Activated CD4-positive, alpha-beta memory T cell treated with anti-CD3 and anti-CD28 coated beads for 36 hours (primary cell): ENCODE measurements at regions of chr12 and their contacts with region 1.

Region 1: DNA sequence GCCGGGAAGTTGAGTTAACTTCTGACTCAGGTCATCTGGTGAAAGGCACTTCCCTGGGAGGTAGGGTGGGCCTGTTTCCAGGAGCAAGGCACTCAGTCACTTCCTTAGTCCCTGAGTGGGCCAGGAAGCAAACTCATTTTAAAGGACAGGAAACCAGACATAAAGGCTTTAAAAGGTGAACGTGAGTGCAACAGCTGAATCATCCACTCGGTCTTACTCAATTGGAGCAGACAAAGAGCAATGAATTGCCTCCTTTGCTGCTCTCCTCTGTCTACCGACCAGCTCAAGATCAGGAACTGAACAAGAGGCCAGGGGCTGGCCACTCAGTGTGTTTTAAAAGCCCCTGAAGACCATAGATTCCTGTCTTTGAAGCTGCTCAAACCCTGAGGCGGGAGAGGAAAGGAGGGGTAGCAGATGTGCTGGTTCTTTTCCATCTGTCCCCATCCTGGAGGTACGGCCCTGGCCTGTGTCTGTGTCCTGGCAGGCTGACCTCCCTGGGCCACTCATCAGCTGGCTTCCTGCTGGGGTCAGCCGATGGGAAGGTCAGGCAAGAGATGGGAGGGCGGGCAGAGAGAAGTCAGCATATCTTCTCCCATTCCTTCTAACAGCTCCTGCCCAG is 148.9 kb downstream of the PPM1H start:
- DNase-seq: peak; percentile 28
- H3K4me3 Mint-ChIP-seq: no peak overlapping the region
- H3K27ac Mint-ChIP-seq: no peak overlapping the region
- H3K4me1 Mint-ChIP-seq: peaks cover 11% of the 10 kb centered on the region
- H3K27me3 Mint-ChIP-seq: peaks cover 2% of the 10 kb centered on the region

Region 2: GRCh38 chr12:62640910-62641448 is 145.1 kb before region 1 on chr12:
- CTCF ChIA-PET with region 1: no interaction called
- POLR2A ChIA-PET with region 1: no interaction called
- intact Hi-C with region 1: loop called (anchors 5 kb)
- DNase-seq: peak; percentile 69
- H3K4me3 Mint-ChIP-seq: peak overlapping the region; percentile 44
- H3K27ac Mint-ChIP-seq: peak overlapping the region; percentile 61
- H3K4me1 Mint-ChIP-seq: peaks cover 22% of the 10 kb centered on the region
- H3K27me3 Mint-ChIP-seq: peaks cover 6% of the 10 kb centered on the region